Psoas muscle (tissue), 8 donors: ENCODE measurements at regions of chr17 and their contacts with region 1.

Region 1: DNA sequence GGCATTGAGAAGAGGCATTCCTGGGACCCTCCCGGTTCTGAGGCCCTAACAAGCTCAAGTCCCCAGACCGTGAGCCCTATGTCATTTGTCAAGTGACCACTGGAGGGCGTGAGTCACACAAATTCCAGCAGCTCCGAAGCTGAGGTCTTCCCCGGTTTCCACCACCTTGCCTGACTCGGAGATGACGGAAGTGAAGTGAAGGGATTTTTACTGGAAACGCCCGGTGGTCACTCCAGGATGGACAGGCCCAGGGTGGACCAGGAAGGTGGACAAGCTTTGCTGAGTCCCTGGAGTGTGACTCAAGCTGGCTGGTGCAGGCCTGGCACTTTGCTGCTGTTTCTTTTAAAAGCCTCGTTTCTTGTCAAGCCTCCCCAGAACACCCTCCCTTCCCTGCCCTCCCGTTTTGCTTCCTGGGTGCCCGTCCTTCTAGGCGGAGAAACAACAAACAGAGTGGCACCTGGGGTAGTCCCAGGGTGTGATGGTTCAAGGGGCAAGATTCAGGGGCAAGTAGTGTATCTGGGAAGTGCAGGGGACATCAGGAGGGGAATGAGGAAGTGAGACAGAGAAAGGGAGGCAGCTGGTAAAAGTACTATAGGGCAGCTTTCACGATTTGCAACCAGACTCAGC is 5.3 kb upstream of the NOS2 start:
- DNase-seq: peak; percentile 75 to 78
- ATAC-seq: peak; percentile 85 to 95 (median 92)
- H3K4me3 ChIP-seq: peak overlapping the region; percentile 47
- H3K27ac ChIP-seq: no peak overlapping the region
- H3K4me1 ChIP-seq: no peaks in the 10 kb centered on the region
- H3K27me3 ChIP-seq: peaks cover 0 to under 1% (median 0%) of the 10 kb centered on the region in 3 donors
- CTCF ChIP-seq: peak; percentile 76

Region 2: DNA sequence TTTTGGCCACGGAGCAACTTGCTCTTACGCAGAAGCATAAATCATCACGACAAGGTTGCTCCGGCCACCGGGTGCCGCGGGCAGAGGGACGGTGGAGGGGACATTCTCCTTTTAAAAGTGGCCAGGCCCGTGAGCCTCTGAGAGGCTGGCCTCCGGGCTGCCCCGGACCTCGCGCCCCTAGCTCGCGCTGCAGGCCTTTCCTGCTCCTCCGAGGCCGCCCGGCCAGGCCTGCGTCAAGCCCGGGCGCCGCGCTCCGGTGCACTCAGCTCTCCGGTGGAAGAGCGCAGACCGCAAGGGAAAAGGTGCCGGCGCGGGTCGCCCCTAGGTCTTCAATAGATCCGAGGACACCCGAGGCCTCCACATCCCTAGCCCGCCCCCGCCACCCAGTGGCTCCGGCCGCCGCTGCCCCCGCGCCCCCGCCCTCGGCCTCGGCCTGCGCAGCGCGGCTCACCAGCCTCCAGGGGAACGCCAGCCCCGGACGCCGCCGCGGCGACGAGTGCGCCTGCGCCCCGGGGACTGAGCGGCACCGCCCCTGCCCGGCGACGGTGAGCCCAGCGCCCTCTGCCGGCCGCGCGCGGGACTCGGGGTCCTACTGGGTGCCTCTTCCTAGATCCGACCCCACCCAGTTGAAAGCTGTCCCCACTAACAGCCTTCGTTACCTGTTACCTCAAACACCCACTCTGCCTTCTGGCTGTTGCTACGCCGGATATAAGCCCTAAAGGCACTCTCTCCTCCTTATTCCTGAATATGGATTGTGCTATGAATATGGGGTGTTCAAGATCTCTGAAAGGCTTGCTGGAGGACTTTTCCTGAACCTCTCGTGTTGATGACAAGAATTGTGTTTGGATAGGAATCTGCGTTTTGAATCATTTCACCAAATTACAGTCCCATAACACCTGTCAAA is 87.5 kb after region 1 on chr17 and contains the start of gene LYRM9:
- intact Hi-C with region 1: loop called (anchors 1 to 5 kb)
- DNase-seq: peak; percentile 94 to 97
- ATAC-seq: peak; percentile 100
- H3K4me3 ChIP-seq: peak within 1 kb of the TSS; percentile 90
- H3K27ac ChIP-seq: peak within 1 kb of the TSS; percentile 84
- H3K4me1 ChIP-seq: peaks cover 8% of the 10 kb centered on the region
- H3K27me3 ChIP-seq: no peaks in the 10 kb centered on the region
- CTCF ChIP-seq: peak; percentile 97
- total RNA-seq, gene LYRM9: 4.5 to 8.1 (median 6.5) TPM

Region 3: DNA sequence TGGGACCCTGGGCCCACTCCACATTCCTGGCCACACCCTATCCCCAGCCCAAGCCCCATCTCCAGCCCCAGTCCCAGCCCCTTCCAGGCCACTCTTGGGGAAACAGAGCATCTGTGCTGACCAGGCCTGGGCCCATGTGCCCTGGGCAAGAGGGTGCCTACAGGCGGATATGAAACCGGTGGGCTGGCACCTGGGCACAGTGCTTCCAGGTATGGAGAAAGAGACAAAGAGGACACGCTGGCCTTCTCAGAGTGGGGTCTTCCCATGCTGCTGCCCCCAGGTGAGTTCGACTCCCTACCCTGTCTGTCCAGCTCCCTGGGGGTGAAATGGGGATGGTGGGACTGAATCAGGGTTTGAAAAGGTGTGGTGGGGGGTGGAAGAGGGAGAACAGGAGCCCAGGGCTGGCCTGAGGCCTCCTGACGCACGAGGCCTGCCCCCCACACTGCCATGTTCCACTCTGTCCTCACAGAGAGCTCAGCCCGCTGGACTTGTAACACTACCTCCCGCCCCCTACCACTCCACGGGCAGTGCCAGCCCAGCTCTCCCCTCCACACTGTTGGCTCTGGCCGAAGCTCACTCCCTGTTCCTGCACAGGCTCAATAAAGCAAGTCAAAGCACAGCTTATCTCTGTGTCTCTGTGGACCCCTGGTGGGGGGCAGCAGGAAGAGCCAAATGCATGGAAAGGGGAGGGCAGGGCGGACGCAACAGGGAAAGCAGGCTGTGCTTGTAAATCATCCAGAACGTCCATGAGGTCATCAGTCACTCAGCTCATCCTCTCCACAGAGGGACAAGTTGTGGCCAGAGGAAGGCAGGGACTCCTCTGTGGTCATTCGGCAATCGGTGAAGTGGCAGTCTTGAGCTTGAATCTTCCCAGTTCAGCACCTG is 442.3 kb after region 1 on chr17:
- intact Hi-C with region 1: loop called in 1 of 2 experiments (anchors 2 kb)
- DNase-seq: no peak
- ATAC-seq: no peak
- H3K4me3 ChIP-seq: no peak overlapping the region
- H3K27ac ChIP-seq: no peak overlapping the region
- H3K4me1 ChIP-seq: no peaks in the 10 kb centered on the region
- H3K27me3 ChIP-seq: peaks cover 0 to 27% (median 8%) of the 10 kb centered on the region in 3 donors
- CTCF ChIP-seq: no peak